A549 (cell line): ENCODE measurements at regions of chr16 and their contacts with region 1.

Region 1: GRCh38 chr16:81686391-81687130 is 92.5 kb upstream of the PLCG2 start:
- DNase-seq: no peak
- ATAC-seq: peak; percentile 6 to 20; a peak in 2 of 6 replicates
- H3K4me3 ChIP-seq: no peak overlapping the region
- H3K27ac ChIP-seq: no peak overlapping the region
- H3K4me1 ChIP-seq: no peaks in the 10 kb centered on the region
- CTCF ChIP-seq: no peak
- EP300 ChIP-seq: no peak
- POLR2A ChIP-seq: no peak
- RAD21 ChIP-seq: no peak

Region 2: DNA sequence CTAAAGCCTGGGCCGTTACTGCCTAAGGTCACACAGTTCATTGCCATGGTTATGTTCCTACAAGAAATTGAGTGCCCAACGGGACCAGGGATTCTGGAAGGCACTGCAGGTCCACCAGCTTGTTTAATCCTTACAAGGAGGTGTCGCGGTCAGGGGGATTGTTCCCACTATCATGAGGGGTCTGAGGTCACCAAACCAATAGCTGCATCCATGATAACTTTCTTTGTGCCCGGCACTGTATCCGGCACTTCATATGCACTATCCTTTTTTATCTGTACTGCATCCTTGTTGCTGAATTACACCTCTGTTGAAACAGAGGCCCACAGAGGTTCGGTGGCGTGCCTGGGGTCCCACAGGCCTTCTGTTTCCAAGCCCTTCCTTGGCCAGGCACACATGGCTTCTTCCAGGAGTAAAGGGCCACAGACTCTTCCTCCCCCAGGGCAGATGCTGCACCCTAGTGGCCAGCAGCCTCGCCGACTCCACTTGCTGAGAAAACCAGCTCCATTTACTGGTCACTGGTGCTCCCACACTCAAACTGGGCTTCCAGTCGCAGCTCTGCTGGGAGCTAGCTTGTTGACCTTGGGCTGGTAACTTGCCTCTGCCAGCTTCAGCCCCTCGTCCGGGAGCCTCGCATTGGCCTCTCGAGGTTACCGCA is 10.5 kb after region 1 on chr16:
- CTCF ChIA-PET with region 1: interaction called, 19 read pairs
- POLR2A ChIA-PET with region 1: no interaction called
- DNase-seq: peak; percentile 59 to 76
- ATAC-seq: peak; percentile 59 to 78; a peak in 5 of 6 replicates
- H3K4me3 ChIP-seq: no peak overlapping the region
- H3K27ac ChIP-seq: peak overlapping the region; percentile 10 to 75; a peak in 4 of 6 replicates
- H3K4me1 ChIP-seq: peaks cover 40% of the 10 kb centered on the region
- CTCF ChIP-seq: peak; percentile 66
- EP300 ChIP-seq: no peak
- POLR2A ChIP-seq: no peak
- RAD21 ChIP-seq: peak; percentile 70 to 73